ENCODE measurements at regions of chr1 and their contacts with region 1.

Region 1: DNA sequence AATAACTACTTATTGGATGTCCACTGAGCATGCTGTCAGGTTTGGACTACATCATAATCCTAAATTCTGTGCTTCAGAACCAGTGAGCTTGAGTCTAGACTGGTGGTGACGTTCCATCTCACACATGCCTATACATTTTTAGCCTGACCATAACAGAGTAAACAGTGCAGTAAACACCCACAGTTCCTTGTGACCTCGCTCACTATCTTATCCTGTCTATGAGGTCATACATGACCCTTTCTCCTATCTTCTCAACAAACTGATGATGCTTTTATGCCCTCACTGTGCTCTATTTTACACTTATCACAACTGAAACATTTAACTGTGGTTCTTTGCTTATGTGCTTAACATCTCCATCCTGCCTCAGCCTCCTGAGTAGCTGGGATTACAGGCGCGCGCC is 91.2 kb downstream of the ENAH start:
- DNase-seq: no peak
- H3K4me3 ChIP-seq: no peak overlapping the region
- H3K27me3 ChIP-seq: no peaks in the 10 kb centered on the region
- CTCF ChIP-seq: no peak

Region 2: DNA sequence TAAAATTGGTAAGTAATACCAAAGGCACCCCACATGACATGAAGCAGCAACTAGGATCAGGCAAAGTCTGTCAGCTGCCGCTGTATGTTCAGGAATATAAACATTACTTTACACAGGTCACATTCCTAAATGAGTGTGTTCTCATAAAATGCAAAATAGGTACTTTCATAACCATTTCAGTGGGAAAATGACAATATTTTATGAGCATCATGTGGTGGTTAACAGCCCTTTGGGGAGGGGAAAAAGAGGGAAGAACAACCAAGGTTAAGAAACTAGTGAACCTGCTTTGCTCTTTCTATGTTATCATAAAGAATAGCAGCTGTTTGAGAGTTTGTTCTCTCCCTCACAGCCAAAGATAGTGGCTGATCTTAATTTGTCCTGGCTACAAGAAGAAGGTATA is 28.4 kb before region 1 on chr1:
- CTCF ChIA-PET with region 1: no interaction called
- POLR2A ChIA-PET with region 1: no interaction called
- DNase-seq: no peak
- H3K4me3 ChIP-seq: no peak overlapping the region
- H3K27me3 ChIP-seq: no peaks in the 10 kb centered on the region
- CTCF ChIP-seq: no peak

Region 3: DNA sequence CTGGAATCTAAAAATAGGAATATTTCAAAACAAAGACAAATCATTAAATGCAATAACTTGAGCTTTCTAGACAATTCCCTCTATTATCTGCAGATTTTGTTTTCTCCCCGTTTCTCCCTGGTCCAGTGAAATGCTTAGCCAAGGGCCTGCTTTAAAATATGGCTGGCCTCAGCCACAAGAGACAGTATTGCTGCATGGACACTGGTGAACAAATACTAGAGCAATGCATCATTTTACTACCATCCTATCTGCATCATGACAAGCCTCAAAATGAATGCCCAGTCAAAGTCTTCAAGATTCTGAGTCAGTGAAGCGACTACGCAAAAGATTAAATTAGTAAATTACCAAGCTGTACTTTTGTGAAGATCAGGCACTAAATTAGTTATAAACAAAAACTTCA is 10.7 kb after region 1 on chr1:
- CTCF ChIA-PET with region 1: interaction called, 11 read pairs
- POLR2A ChIA-PET with region 1: no interaction called
- DNase-seq: no peak
- H3K4me3 ChIP-seq: no peak overlapping the region
- H3K27me3 ChIP-seq: no peaks in the 10 kb centered on the region
- CTCF ChIP-seq: peak; percentile 48

Measured in BJ (cell line).